ENCODE measurements at regions of chr12 and their contacts with region 1.

Region 1: GRCh38 chr12:10749700-10750384 is 26.7 kb upstream of the YBX3 start:
- DNase-seq: peak; percentile 47
- ATAC-seq: peak; percentile 96

Region 2: DNA sequence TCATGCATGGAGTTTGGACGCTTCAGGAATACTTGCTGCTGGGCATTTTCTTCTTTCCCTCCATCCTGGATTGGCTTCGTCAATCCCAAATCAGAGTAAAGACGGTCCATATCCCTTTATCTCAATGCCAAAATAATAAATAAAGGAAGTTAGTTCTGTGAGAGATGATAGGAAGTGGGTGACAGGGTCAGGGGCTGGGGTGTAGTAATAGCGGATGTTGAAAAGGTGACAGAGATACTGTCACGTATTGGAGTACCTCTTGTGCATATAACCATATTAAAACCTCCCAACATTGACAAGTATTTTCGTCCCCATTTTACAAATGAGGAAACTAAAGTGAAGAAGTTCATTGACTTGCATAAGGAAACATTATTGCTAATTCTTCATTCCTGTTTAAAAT is 148.9 kb before region 1 on chr12:
- intact Hi-C with region 1: no loop called
- DNase-seq: no peak
- ATAC-seq: no peak

Region 3: DNA sequence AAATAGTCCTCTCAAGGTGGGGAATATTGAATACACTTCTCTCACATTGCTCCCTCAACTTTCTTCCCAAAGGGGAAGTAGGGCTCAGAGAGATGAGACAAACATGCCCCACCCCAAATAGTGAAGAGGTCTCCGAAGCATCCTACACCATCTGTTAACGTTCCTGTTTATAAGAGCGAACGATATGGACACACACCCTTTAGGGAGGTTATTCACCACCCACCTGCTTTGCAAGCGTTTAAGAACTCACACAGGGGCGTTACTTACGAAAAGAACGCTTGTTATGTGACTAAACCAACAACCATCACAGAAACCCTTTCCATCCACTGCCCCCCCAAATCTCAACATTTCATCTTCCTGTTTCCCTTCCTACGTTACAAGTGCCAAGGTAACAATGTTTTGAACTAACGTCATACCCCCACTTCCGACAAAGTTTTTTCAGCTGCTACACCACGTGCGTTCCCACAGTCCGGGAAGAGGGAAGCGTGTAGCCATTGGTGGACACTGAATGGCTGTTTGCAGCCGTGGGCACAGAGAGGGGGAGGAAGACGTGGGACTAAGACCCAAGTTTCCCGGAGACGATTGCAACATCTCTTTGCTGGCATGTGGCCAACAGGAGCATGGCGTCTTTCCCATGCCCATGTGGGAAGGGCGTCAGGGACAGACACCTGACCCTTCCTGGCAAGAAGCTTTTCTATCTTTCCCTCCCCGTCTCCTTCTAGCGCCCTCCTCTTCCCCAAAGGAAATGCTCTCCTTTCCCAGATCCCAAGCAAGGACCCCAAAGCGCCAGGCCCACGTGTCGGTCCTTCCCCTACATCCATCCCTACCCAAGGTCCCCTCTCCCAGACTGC is 28.0 kb before region 1 on chr12:
- intact Hi-C with region 1: loop called (anchors 2 kb)
- DNase-seq: peak; percentile 89
- ATAC-seq: peak; percentile 89

Region 4: GRCh38 chr12:10810068-10810467 is 60.2 kb after region 1 on chr12 and contains the start of gene TAS2R9:
- intact Hi-C with region 1: no loop called
- DNase-seq: no peak
- ATAC-seq: no peak
- total RNA-seq, gene TAS2R9: not detected